ENCODE measurements at regions of chr2 and their contacts with region 1.

Region 1: DNA sequence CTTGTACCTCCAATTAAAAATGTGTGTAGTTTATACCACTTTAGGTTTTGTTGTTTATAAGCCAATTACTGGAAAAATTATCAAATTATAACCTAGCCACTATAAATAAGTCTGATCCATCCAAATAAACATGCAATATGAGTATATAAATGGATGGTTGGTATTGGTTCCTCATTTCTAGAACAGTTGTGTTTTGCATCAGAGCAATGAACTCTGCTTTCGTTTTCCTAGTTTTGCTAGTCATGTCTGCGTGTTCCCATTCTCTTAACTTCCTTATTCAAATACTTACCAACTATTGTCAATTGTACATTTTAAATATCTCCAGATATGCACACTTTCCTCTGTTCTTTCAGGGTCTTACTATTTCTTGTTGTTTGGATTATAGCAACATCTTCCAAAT is 641.7 kb downstream of the NR4A2 start:
- H3K4me3 Mint-ChIP-seq: no peak overlapping the region
- H3K27ac Mint-ChIP-seq: peak overlapping the region; percentile 84
- H3K4me1 Mint-ChIP-seq: peaks cover 52% of the 10 kb centered on the region
- H3K27me3 Mint-ChIP-seq: no peaks in the 10 kb centered on the region

Region 2: DNA sequence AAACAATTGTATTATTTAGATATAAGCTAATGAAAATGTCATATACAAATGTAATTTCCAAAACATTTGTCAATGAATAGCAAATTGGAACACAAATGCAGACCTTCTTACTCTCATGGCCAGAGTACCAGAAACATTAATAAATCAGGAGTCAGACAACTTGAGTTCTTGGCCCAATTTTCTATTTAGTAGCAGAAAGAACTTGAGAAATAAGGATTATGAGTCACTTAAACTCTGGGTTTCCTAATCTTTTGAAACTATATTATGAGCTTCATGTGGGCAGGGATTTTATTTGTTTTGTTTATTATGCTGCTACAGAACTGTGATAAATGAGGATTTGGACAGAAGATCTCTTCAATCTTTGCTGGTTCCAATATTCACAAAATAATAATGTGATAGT is 45.0 kb before region 1 on chr2:
- intact Hi-C with region 1: no loop called
- H3K4me3 Mint-ChIP-seq: no peak overlapping the region
- H3K27ac Mint-ChIP-seq: no peak overlapping the region
- H3K4me1 Mint-ChIP-seq: no peaks in the 10 kb centered on the region
- H3K27me3 Mint-ChIP-seq: no peaks in the 10 kb centered on the region

Region 3: DNA sequence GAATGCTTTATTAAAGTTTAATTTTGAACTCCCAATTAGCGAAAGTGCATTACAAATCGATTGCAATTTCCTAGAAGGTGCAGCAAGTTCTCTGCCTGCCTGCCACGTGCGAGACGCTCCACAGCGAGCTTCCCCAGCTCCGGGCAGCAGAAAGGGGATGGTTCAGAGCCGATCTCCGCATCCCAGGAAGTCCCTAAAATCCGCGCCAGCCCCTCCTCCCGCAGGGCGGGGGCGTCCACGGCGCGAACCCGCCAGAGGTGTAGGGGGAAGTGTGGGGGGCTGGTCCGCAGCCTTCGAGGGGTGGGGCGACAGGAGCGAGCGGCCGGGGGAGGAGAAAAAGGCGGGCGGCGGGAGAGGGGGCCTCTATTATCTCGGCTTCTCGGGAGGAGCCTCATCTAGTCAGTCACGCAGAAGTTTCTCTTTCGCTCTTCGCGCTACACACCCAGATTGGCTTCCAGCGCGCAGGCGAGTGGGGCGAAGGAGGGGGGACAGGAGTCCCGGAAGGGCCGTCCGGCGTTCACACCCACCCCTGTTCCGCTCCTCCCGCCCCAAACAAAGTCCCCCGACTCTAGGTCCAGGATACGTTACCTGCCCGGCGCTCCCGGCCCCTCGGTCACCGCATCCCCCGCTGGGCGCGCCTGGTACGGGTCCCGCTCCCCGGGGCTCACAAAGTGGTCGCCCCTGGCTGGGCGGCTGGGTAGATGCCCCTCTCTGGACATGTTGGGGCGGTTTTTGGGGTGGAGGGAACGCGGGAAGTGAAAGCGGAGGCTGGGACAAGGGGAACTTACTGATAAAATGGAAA is 650.9 kb after region 1 on chr2:
- intact Hi-C with region 1: loop called (anchors 10 kb)
- H3K4me3 Mint-ChIP-seq: peak overlapping the region; percentile 96
- H3K27ac Mint-ChIP-seq: peak overlapping the region; percentile 100
- H3K4me1 Mint-ChIP-seq: peaks cover 19% of the 10 kb centered on the region
- H3K27me3 Mint-ChIP-seq: no peaks in the 10 kb centered on the region

Region 4: DNA sequence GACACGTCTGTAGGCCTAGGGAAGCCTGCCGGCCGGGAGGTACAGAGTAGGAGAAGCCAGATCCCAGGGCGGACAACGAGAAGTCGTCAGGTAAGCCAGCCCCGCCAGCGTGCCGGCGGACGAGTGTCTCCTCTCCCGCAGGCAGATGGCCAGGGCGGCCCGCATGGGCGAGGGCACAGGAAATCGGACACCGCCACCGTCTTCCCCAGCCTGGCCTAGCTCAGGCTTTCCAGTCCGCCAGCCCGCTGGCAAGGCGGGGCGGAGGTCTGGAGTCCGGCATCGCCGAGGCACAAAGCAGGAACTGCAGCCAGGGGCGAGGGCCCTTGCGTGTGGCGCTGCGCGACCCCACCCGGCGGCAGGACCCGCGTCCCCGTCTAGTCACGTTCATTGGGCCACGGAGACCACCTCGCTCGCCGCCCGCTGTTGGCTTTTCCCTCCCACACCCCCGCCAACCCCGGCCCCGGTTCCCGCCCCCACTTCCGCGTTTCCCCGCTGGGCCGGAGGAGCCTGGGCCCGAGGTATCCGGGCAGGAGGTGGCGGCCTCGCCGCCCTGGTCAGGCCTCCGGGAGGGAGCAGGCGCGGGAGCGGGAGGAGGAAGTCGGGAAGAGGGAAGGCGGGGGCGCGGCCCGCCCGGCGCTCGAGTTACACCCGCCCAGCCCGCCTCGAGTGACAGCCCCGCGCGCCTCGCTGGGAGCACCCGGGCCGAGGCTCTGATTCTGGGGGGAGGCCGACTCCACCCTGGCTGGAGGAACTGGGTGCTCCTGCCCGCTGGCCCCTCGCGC is 745.1 kb after region 1 on chr2 and contains the start of gene GPD2:
- intact Hi-C with region 1: loop called (anchors 10 kb)
- H3K4me3 Mint-ChIP-seq: peak within 1 kb of the TSS; percentile 83
- H3K27ac Mint-ChIP-seq: peak within 1 kb of the TSS; percentile 95
- H3K4me1 Mint-ChIP-seq: peaks cover 54% of the 10 kb centered on the region
- H3K27me3 Mint-ChIP-seq: no peaks in the 10 kb centered on the region